Activated CD8-positive, alpha-beta T cell treated with anti-CD3 and anti-CD28 coated beads, Interleukin-2, amount 10 ng/mL, durations not matched to agents 7 days and 5 days (primary cell): ENCODE measurements at regions of chr2 and their contacts with region 1.

Region 1: DNA sequence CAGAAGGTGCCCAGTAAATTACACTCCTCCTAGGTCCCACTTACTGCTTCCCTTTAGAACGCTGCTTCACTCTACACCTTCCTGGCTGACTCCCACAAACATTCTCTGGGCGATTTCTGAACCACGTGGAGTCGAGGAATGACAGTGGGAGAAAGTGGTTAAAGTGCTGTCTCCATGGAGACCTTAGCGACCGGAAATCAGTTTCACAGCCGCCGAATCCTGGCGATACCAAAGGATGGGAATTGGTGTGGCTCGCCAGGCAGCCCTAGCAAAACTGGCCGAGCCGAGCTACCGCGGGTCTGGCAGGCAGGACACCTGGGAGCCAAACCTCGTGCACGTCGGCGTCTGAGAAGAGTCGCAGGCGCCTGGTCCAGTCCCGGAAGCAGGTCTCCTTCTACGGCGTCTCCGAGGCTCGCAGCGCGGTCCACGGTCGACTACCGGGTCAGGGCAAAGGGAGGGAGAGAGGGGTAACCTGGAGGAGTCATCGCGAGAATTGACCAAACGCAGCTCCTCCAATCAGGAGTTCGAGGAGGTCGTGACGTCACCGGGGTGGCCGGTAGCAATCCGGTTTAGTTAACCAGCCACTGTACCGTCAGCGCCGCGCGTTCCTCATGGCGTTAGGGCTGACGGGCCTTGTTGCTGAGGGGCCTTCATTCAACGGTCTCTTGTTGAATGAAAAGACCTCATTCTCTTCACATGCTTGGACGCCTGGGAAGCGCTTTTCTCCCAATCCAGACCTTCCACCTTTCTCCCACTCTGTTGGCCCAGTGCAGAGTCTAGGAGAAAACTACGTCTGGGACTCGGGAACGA is at the start of gene THADA:
- DNase-seq: peak; percentile 99
- ATAC-seq: peak; percentile 98
- H3K4me3 Mint-ChIP-seq: peak within 1 kb of the TSS; percentile 97
- H3K27ac Mint-ChIP-seq: peak within 1 kb of the TSS; percentile 97
- H3K4me1 Mint-ChIP-seq: peaks cover 31% of the 10 kb centered on the region
- H3K27me3 Mint-ChIP-seq: peaks cover 7% of the 10 kb centered on the region
- total RNA-seq, gene THADA: 27.0 to 31.9 TPM

Region 2: DNA sequence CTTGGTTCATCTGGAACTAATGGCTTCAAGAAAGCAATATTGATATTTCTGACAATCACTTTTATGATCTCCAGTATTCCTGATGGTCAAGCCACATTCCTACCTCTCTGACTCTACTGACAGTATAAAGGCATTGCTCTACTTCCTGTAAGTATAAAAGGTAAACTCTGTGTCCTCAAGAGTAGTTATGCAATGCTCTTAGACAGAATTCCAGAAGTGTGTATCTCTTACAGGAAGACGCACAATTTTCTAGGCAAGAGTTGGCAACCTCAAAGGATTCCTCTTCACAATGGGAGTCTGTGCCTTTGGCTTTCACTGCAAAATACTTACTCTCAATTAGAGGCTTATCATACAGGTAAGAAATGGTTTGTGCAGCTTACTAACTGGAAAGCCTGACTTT is 100.1 kb before region 1 on chr2:
- CTCF ChIA-PET with region 1: no interaction called
- POLR2A ChIA-PET with region 1: no interaction called
- DNase-seq: no peak
- ATAC-seq: no peak
- H3K4me3 Mint-ChIP-seq: no peak overlapping the region
- H3K27ac Mint-ChIP-seq: no peak overlapping the region
- H3K4me1 Mint-ChIP-seq: peaks cover 3% of the 10 kb centered on the region
- H3K27me3 Mint-ChIP-seq: no peaks in the 10 kb centered on the region

Region 3: DNA sequence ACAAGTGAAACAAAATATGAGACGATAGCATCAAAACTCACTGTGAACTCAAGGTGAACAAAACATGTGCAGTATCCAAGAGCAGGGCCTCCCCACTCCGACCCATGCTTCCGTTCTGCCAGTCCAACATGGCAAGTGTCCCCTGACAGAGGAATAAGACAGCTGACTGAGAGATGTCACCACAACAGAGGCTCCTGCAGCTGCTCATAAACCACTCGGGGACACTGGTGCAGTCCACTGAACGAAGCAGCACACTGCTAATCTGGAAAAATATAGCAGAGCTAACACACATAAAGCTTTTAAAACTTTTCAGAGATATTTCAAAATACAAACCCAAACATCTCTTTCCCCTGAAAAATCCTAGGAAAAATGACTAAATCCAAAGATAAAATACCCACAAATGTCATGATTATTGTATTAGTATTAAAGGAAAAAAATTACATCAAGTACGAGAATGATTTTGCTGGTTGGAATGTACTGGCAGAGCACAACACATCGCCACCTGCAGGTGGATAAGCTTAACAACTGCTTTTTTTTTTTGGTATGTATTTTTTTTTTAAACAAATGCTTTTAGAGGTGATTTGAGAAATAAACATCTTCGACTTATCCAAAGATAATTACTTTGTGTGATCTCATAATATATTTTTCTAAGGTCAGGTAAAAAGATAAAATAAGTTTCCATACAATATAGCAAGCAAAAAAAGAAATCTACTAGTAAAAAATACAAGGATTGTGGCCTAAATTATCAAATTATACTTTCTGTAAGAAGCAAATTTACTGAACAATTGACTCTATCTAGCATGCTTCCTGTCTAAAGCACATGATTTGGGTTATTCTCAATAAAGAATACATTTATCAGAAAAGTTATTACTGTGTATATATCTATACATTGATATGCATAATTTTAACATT is 18.6 kb before region 1 on chr2:
- CTCF ChIA-PET with region 1: interaction called, 18 read pairs
- POLR2A ChIA-PET with region 1: interaction called, 5 read pairs
- DNase-seq: peak; percentile 43
- ATAC-seq: no peak
- H3K4me3 Mint-ChIP-seq: no peak overlapping the region
- H3K27ac Mint-ChIP-seq: no peak overlapping the region
- H3K4me1 Mint-ChIP-seq: peaks cover 14% of the 10 kb centered on the region
- H3K27me3 Mint-ChIP-seq: no peaks in the 10 kb centered on the region

Region 4: GRCh38 chr2:43609290-43609937 is 13.6 kb after region 1 on chr2:
- CTCF ChIA-PET with region 1: interaction called, 25 read pairs
- POLR2A ChIA-PET with region 1: interaction called, 11 read pairs
- DNase-seq: peak; percentile 53
- ATAC-seq: peak; percentile 77
- H3K4me3 Mint-ChIP-seq: no peak overlapping the region
- H3K27ac Mint-ChIP-seq: no peak overlapping the region
- H3K4me1 Mint-ChIP-seq: peaks cover 4% of the 10 kb centered on the region
- H3K27me3 Mint-ChIP-seq: peaks cover 10% of the 10 kb centered on the region